ENCODE measurements at regions of chr6 and their contacts with region 1.

Region 1: DNA sequence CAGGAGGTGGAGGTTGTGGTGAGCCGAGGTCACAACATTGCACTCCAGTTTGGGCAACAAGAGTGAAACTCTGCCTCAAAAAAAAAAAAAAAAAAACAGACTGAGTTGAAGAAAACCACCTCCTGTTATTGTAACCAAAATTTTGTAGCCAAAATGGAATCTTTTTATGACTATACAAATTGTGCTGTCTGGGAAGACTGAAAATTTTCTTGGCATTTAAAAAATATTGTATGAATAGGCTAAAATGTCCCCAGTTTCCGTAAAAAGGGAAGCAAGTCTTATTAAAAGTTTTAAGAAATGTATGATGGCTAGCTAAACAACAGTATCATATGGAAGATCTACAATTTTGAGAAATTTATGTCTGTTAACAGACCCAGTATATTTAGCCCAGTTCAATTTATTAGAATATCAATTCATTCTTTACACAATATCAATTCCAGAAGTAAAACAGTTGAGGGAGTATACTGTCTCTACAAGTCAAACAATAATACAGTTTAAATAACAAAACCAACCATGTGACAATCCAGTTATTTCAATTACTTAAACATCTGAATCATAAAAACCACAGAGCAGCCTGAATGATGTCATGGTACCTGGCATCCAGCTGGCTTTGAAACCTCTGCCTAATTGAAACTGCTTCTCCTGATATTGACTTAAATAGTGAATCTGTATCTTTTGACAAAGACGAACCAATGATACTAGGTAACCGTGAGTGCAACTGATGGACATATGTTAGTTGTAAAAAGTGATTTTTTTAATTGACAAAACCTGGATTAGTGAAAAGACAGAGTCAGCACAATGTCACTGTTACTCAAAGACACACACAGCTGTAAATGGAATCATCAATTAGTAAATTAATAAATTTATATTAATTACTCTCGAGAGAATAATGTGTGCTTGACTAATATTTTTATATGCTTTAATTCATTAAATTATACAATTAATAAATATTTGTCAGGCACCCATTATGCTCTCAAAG is 166.6 kb upstream of the MARCKS start:
- DNase-seq: peak; percentile 29 to 66 (median 55)
- H3K4me3 ChIP-seq: no peak overlapping the region
- H3K4me3 Mint-ChIP-seq: no peak overlapping the region
- H3K27ac ChIP-seq: peak overlapping the region in 1 of 2 donors; percentile 28
- H3K27ac Mint-ChIP-seq: peak overlapping the region in 1 of 7 donors; percentile 72
- H3K4me1 ChIP-seq: peaks cover 5 to 10% of the 10 kb centered on the region in 2 donors
- H3K4me1 Mint-ChIP-seq: peaks cover 15% of the 10 kb centered on the region
- H3K27me3 ChIP-seq: no peaks in the 10 kb centered on the region
- H3K27me3 Mint-ChIP-seq: peaks cover 0 to 3% (median 1%) of the 10 kb centered on the region in 3 donors
- CTCF ChIP-seq: no peak

Region 2: DNA sequence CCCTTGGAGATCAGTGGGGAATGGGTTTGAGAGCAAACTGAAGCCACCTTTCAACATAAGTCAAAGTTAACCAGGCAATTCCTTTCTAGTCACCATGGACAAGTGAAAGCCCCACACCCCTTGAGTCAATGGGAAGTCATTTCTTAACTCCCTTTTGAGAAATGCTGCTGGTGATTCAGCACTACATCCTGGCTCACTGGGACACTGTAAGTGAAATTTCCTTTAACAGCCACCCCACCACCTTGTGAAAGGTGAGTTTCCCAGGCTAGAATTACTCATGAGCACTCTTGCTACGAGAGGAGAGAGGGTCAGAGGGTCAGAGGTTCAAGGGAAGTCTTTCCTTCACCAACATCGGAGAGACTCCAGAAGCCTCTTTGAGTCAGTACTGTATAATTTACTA is 73.3 kb after region 1 on chr6:
- intact Hi-C with region 1: loop called in 1 of 2 experiments (anchors 10 kb)
- DNase-seq: peak; percentile 82 to 98 (median 95)
- H3K4me3 ChIP-seq: peak overlapping the region in 1 of 3 experiments; percentile 36
- H3K4me3 Mint-ChIP-seq: peak overlapping the region in 1 of 2 donors; percentile 73
- H3K27ac ChIP-seq: peak overlapping the region; percentile 55 to 93
- H3K27ac Mint-ChIP-seq: peak overlapping the region; percentile 92 to 98 (median 97)
- H3K4me1 ChIP-seq: peaks cover 29 to 32% of the 10 kb centered on the region in 2 donors
- H3K4me1 Mint-ChIP-seq: peaks cover 26% of the 10 kb centered on the region
- H3K27me3 ChIP-seq: no peaks in the 10 kb centered on the region
- H3K27me3 Mint-ChIP-seq: no peaks in the 10 kb centered on the region
- CTCF ChIP-seq: no peak